GM10248 (cell line): ENCODE measurements at regions of chr10 and their contacts with region 1.

Region 1: GRCh38 chr10:84700668-84701369 is 372.4 kb downstream of the CCSER2 start:
- DNase-seq: no peak
- CTCF ChIP-seq: no peak

Region 2: DNA sequence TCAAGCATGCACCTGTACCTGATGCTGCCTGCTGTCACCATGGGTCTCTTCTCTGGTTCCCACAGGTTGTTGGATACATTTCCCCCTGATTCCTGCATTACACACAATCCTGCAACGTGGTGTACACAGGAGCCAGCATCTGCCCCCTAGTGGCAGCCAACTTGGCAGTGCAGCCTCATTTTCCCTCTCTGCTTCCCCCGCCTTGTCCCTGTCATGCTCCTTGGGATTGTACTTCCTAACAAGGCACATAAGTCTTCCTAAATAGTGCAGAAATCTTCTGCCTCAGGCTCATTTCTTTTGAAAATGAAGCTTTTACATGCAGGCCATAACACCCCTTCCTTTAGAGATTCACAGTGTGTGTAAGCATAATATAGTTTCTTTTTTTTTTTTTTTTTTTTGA is 15.1 kb after region 1 on chr10:
- CTCF ChIA-PET with region 1: interaction called, 14 read pairs
- POLR2A ChIA-PET with region 1: no interaction called
- DNase-seq: peak; percentile 48
- CTCF ChIP-seq: peak; percentile 55